ENCODE measurements at regions of chr2 and their contacts with region 1.

Region 1: DNA sequence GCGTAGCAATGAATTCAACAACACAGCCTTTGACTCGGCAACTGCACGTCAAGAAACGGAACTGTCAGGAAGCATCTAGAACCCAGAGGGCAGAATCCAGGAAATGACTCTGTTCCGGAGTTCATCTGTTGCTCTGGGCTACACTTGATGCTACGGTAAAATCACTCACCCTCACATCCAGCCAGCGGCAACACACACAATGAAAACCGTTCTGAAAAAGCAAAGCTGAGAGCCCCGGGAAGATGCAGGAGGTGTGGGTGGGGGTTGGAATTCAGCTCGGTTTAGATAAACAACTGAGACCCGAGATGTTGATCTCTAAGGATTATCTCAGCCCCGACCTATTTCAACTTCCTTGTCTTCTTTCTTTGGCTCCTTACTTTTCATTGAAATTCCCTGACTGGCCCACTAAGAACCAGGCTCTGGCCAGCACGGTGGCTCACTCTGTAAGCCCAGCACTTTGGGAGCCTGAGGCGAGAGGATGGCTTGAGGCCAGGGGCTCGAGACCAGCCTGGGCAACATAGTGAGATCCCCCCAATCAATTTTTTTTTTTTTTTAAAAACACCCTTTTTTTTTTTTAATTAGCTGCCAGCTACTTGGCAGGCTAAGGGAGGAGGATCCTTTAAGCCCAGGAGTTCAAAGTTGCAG is 13.3 kb upstream of the RAB17 start:
- DNase-seq: peak in 1 of 2 donors; percentile 86
- H3K4me3 ChIP-seq: peak overlapping the region in 1 of 2 donors; percentile 21
- H3K27ac ChIP-seq: peak overlapping the region; percentile 75 to 90
- H3K4me1 ChIP-seq: peaks cover 17 to 31% of the 10 kb centered on the region in 2 donors
- H3K27me3 ChIP-seq: no peaks in the 10 kb centered on the region
- CTCF ChIP-seq: no peak

Region 2: GRCh38 chr2:237122214-237122666 is 481.6 kb before region 1 on chr2:
- intact Hi-C with region 1: no loop called
- DNase-seq: peak in 1 of 2 donors; percentile 76
- H3K4me3 ChIP-seq: no peak overlapping the region
- H3K27ac ChIP-seq: no peak overlapping the region
- H3K4me1 ChIP-seq: no peaks in the 10 kb centered on the region
- H3K27me3 ChIP-seq: no peaks in the 10 kb centered on the region
- CTCF ChIP-seq: peak; percentile 68 to 71 (median 69)

Region 3: GRCh38 chr2:237616734-237617586 is 13.1 kb after region 1 on chr2:
- intact Hi-C with region 1: loop called (anchors 1 kb)
- DNase-seq: no peak
- H3K4me3 ChIP-seq: no peak overlapping the region
- H3K27ac ChIP-seq: peak overlapping the region; percentile 89 to 93
- H3K4me1 ChIP-seq: peaks cover 13 to 51% of the 10 kb centered on the region in 2 donors
- H3K27me3 ChIP-seq: no peaks in the 10 kb centered on the region
- CTCF ChIP-seq: no peak

Region 4: DNA sequence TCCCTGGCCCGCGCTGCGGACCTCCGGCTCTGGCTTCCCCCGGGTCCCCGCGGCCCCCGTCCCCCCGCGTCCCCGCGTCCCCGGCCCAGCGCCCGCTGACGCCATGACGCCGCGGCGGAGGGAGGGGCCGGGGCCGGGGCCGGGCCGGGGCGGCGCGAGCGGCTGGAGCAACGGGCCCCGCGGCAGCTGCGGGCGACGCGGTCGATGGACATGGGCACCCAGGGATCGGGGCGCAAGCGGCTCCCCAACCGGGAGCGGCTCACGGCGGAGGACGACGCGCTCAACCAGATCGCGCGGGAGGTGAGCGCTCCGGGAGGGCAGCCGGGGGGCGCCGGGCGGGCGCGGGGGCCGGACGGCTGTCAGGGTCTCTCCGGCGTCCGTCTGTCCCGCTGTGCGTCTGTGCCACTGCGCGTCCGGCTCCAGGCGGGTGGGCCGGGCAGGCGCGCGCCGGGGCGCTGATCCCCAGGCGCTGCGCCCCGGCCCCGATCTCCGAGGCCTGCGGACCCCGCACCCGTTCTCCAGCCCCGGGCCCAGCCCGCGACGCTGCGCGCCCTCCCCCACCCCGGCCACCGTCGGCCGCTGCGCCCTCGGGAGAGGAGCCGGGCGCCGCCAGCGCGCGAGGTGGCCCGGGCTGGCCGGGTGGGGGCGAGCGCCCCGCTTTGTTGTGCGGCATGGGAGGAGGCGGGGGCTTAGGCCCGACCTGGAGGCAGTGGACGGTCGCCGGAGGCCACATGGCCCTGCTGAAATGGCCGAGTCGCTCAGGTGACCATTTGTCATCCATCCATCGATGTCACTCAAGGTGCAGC is 23.8 kb after region 1 on chr2 and contains the start of gene LRRFIP1:
- intact Hi-C with region 1: loop called (anchors 1 kb)
- DNase-seq: peak in 1 of 2 donors; percentile 77
- H3K4me3 ChIP-seq: peak within 1 kb of the TSS; percentile 89 to 97
- H3K27ac ChIP-seq: peak within 1 kb of the TSS; percentile 94 to 99
- H3K4me1 ChIP-seq: peaks cover 22 to 52% of the 10 kb centered on the region in 2 donors
- H3K27me3 ChIP-seq: no peaks in the 10 kb centered on the region
- CTCF ChIP-seq: peak in 1 of 3 experiments; percentile 20
- total RNA-seq, gene LRRFIP1: 133 TPM

Region 5: GRCh38 chr2:237647176-237648007 is 43.6 kb after region 1 on chr2:
- intact Hi-C with region 1: loop called (anchors 5 kb)
- DNase-seq: no peak
- H3K4me3 ChIP-seq: peak overlapping the region in 1 of 2 donors; percentile 16
- H3K27ac ChIP-seq: peak overlapping the region; percentile 31 to 91
- H3K4me1 ChIP-seq: peaks cover 8 to 27% of the 10 kb centered on the region in 2 donors
- H3K27me3 ChIP-seq: no peaks in the 10 kb centered on the region
- CTCF ChIP-seq: no peak

Region 6: GRCh38 chr2:237662671-237663093 is 58.8 kb after region 1 on chr2:
- intact Hi-C with region 1: loop called (anchors 2 kb)
- DNase-seq: peak; percentile 82 to 97
- H3K4me3 ChIP-seq: no peak overlapping the region
- H3K27ac ChIP-seq: peak overlapping the region; percentile 60 to 74
- H3K4me1 ChIP-seq: peaks cover 13 to 22% of the 10 kb centered on the region in 2 donors
- H3K27me3 ChIP-seq: no peaks in the 10 kb centered on the region
- CTCF ChIP-seq: no peak

Region 7: GRCh38 chr2:237744613-237745249 is 140.9 kb after region 1 on chr2:
- intact Hi-C with region 1: loop called (anchors 2 kb)
- DNase-seq: peak in 1 of 2 donors; percentile 89
- H3K4me3 ChIP-seq: peak overlapping the region in 1 of 2 donors; percentile 13
- H3K27ac ChIP-seq: peak overlapping the region; percentile 42 to 87
- H3K4me1 ChIP-seq: peaks cover 15 to 41% of the 10 kb centered on the region in 2 donors
- H3K27me3 ChIP-seq: no peaks in the 10 kb centered on the region
- CTCF ChIP-seq: peak; percentile 90 to 97 (median 95)